Activated CD8-positive, alpha-beta T cell treated with anti-CD3 and anti-CD28 coated beads for 36 hours (primary cell): ENCODE measurements at regions of chr19 and their contacts with region 1.

Region 1: DNA sequence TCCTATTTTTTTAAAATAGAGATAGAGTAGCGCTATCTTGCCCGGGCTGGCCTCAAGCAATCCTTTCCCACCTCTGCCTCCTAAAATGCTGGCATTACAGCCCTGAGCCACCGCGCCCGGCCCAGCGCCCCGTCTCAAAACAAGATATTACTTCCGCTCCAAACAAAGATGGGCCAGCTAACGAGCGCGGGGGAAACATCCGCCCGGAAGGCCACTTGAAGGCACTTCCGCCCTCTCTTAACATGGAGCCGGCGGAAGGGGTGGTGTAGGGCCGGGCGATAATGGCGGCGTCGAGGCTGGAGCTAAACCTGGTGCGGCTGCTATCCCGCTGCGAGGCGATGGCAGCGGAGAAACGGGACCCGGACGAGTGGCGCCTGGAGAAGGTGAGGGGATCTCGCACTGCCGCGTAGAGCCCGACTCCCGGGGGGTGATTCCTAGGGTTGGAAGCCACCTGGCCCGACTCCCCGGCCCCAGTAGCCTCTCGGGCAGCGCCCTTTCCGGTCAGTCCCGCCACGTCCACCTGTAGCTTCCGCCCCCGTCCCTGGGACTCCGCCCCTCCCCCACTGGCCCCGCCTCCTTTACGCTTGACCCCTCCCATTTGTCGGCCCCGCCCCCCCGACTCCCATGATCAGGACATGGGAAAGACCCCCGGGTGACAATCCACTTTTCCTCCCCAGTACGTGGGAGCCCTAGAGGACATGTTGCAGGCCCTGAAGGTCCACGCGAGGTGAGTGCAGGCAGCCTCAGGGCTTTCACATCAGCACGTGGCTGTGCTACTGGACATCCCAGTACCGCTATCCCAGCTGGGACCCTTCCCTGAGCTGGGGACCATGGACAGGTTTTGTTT is at the start of gene USE1:
- DNase-seq: peak; percentile 95
- ATAC-seq: peak; percentile 96
- H3K4me3 Mint-ChIP-seq: peak within 1 kb of the TSS; percentile 82
- H3K27ac Mint-ChIP-seq: peak within 1 kb of the TSS; percentile 97
- H3K4me1 Mint-ChIP-seq: peaks cover 15% of the 10 kb centered on the region
- H3K27me3 Mint-ChIP-seq: no peaks in the 10 kb centered on the region
- CTCF ChIP-seq: no peak
- total RNA-seq, gene USE1: 26.5 to 27.1 TPM

Region 2: DNA sequence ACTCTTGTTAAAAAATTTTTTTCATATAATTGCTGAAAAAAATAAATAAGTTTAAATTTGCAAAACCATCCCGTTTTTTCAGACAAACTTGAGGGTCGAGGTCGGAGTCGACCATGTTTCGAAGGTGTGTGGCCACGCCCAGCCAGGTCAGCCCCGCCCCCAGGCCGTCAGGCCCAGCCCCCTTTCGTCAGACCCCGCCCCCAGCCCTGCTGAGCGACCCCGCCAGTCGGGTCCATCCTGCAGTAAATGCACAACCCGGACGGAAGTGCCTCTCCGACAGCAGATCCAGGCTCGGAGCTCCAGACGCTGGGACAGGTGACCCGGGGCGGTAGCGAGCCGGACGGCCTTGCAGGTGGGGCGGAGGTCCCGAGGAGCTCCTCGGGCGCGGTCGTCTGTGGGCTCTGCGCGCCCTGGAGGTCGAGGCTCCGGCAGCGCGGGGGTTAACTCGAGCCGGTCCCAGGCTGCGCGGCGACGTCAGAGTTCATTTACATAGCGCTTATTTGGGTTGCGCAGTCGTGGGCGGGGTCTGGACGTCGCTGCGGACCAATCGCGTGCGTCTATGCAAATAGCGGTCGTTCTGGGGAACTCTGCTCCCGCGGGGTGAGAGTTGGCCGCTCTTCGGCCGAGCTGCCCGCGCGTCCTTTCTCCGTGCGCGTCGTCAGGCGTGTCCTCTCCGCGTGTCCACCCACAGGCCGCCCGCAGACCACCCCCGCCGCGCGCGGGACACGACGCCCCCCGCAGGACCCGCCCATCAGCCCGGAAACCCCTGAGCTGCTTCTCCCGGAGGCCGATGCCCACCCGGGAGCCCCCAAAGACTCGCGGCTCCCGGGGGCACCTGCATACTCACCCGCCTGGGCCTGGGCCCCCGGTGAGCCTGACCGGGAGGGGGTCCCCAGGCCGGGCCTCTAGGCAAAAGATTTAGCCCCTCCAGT is 10.9 kb after region 1 on chr19 and contains the start of gene OCEL1:
- CTCF ChIA-PET with region 1: interaction called, 3 read pairs
- POLR2A ChIA-PET with region 1: interaction called, 29 read pairs
- intact Hi-C with region 1: loop called (anchors 1 kb)
- DNase-seq: peak; percentile 99
- ATAC-seq: peak; percentile 92
- H3K4me3 Mint-ChIP-seq: peak within 1 kb of the TSS; percentile 80
- H3K27ac Mint-ChIP-seq: peak within 1 kb of the TSS; percentile 95
- H3K4me1 Mint-ChIP-seq: peaks cover 4% of the 10 kb centered on the region
- H3K27me3 Mint-ChIP-seq: no peaks in the 10 kb centered on the region
- CTCF ChIP-seq: no peak
- total RNA-seq, gene OCEL1: 20.1 TPM

Region 3: DNA sequence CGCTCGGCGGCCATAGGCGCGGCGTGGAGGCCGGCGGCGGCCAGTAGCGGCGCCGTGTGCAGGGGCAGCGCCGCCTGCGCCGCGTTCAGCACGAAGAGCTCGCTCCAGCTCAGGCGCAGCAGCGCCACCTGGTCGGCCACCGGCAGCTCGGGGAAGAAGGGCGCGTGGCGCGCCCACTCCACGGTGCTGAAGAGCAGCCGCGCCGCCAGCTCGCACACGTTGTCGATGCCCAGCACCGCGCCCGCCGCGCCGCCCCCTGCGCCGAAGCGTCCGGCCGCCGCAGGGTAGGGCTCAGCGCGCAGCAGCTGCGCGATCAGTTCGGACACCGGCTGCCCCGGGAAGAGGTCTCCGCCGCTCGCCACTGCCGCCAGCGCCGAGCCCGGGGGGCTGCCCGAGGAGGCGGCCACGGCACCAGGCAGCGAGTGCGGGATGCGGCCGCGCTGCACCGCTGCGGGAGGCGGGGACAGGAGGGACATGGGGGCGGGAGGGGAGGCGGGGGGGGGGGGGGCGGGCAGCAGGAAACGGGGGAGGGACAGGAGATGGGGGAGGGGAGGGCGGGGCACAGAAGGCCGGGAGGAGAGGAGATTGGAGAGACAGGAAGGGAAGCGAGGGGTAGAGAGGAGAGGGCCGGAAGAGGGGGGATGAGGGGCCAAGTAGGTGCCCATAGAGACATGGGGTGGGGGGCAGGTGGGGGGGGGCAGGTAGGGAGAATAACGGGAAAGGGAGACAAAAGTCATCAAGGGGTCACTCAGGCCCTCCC is 20.4 kb after region 1 on chr19:
- CTCF ChIA-PET with region 1: interaction called, 18 read pairs
- POLR2A ChIA-PET with region 1: interaction called, 11 read pairs
- intact Hi-C with region 1: no loop called
- DNase-seq: peak; percentile 80
- ATAC-seq: peak; percentile 85
- H3K4me3 Mint-ChIP-seq: peak overlapping the region; percentile 81
- H3K27ac Mint-ChIP-seq: peak overlapping the region; percentile 72
- H3K4me1 Mint-ChIP-seq: peaks cover 5% of the 10 kb centered on the region
- H3K27me3 Mint-ChIP-seq: no peaks in the 10 kb centered on the region
- CTCF ChIP-seq: peak; percentile 56